MCF 10A (cell line): ENCODE measurements at regions of chr7 and their contacts with region 1.

Region 1: DNA sequence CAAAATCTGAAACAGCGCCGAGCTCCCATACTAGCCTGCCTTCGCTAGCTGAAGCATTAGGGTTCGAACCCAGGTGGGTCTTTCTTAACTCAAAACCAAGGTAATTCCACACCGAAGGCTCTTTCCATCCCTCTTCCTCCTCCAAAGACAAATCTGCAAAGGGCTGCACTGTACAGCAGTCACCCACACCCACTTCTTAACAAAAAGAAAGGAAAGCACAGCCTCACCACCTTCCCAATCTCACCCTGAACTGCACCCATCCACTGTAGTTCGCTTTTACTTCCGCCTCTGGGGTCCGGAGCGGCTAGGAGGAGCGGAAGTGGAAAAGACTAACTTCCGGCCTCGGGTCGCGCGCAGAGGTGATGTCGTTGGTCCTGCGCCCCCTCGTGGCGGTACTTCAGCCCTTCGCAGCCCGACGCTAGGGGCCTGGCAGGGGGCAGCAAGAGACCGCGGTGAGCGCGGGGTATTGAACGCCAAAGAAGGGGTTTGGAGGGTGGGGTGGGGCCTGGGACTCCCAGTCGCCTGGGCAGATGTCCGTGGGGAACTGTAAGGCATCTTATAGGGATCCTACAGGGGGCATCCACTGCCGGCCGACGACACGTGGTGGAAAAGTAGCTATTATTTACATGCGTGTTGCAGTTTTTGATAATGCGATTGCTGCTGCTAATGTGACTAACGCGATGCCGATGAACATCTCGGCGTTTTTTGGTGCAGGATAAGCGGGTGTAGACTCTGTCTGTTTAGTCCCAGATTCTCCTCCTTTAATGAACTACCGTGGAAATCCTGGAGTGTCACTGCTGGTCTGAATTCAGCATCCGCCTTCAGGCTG is at the start of gene MTERF1:
- DNase-seq: peak; percentile 93
- H3K4me3 Mint-ChIP-seq: peak within 1 kb of the TSS; percentile 97
- H3K27ac Mint-ChIP-seq: peak within 1 kb of the TSS; percentile 98
- H3K4me1 Mint-ChIP-seq: peaks cover 33% of the 10 kb centered on the region
- H3K27me3 Mint-ChIP-seq: no peaks in the 10 kb centered on the region
- CTCF ChIP-seq: peak; percentile 94
- total RNA-seq, gene MTERF1: 12.9 and 17.6 TPM in 2 replicates

Region 2: GRCh38 chr7:91596287-91596852 is 284.3 kb before region 1 on chr7:
- CTCF ChIA-PET with region 1: no interaction called
- POLR2A ChIA-PET with region 1: no interaction called
- intact Hi-C with region 1: no loop called
- DNase-seq: no peak
- H3K4me3 Mint-ChIP-seq: no peak overlapping the region
- H3K27ac Mint-ChIP-seq: no peak overlapping the region
- H3K4me1 Mint-ChIP-seq: no peaks in the 10 kb centered on the region
- H3K27me3 Mint-ChIP-seq: no peaks in the 10 kb centered on the region
- CTCF ChIP-seq: no peak

Region 3: GRCh38 chr7:91826377-91826776 is 54.2 kb before region 1 on chr7:
- CTCF ChIA-PET with region 1: interaction called, 276 read pairs
- POLR2A ChIA-PET with region 1: interaction called, 10 read pairs
- intact Hi-C with region 1: loop called (anchors 1 kb)
- DNase-seq: peak; percentile 6
- H3K4me3 Mint-ChIP-seq: no peak overlapping the region
- H3K27ac Mint-ChIP-seq: no peak overlapping the region
- H3K4me1 Mint-ChIP-seq: peaks cover 7% of the 10 kb centered on the region
- H3K27me3 Mint-ChIP-seq: no peaks in the 10 kb centered on the region
- CTCF ChIP-seq: no peak

Region 4: DNA sequence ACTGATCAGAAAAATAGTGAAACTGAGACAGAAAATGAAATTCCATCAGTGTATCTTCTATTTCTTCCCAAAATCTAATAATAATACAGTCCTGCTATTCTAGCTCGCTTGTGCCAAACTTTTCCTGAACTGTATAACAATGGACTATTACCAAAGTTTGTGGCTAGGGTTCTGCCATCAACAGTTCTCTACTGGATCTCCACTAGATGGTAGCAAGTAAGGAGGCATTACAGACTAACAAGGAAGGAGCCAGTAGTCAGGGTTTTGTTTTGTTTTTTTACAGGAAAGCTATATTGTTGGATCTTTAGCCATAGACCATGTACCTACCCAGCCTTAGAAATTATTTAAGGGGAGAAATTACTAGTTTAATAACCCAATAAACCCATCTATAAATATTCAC is 11.0 kb before region 1 on chr7:
- CTCF ChIA-PET with region 1: interaction called, 34 read pairs
- POLR2A ChIA-PET with region 1: interaction called, 4 read pairs
- intact Hi-C with region 1: no loop called
- DNase-seq: no peak
- H3K4me3 Mint-ChIP-seq: no peak overlapping the region
- H3K27ac Mint-ChIP-seq: no peak overlapping the region
- H3K4me1 Mint-ChIP-seq: peaks cover 5% of the 10 kb centered on the region
- H3K27me3 Mint-ChIP-seq: no peaks in the 10 kb centered on the region
- CTCF ChIP-seq: no peak

Region 5: DNA sequence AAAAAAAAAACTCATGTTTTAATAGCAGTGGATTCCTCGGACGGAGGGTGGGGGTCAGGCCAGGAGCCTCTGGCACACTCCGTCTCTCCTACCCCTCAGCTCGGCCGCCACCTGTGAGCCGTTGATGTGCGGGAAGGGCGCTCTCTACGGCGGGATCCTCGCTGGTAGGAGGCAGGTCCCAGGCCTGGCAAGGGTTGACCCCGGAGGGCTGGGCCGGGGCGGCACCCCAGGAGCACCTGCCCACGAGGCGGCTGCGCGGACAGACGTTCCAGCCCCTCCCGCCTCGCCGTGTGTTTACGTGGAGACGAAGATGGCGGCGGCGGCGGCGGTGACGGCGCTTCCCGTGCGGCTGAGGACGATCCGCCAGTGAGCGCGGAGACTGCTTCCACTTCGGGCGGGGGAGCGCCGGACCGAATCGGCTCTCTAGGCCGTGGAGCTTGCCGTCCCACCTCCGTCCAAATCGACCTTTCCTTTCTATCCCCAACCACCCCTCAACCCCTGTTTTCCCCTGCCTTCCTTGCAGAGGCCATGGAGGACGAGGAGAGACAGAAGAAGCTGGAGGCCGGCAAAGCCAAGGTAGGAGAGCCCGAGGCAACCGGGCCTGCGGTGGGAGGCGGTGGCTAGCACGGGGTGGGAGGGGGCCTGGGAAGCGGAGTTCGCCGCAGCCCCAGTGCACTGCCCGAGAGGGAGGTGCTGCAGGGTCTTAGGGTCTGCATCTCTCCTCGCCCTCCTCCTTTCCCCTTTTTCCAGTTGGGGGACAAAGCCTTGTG is 60.1 kb after region 1 on chr7 and contains the start of gene AKAP9:
- CTCF ChIA-PET with region 1: interaction called, 41 read pairs
- POLR2A ChIA-PET with region 1: interaction called, 46 read pairs
- intact Hi-C with region 1: loop called (anchors 2 kb)
- DNase-seq: peak; percentile 88
- H3K4me3 Mint-ChIP-seq: peak within 1 kb of the TSS; percentile 86
- H3K27ac Mint-ChIP-seq: peak within 1 kb of the TSS; percentile 93
- H3K4me1 Mint-ChIP-seq: peaks cover 11% of the 10 kb centered on the region
- H3K27me3 Mint-ChIP-seq: no peaks in the 10 kb centered on the region
- CTCF ChIP-seq: no peak
- total RNA-seq, gene AKAP9: 36.8 and 39.2 TPM in 2 replicates

Region 6: GRCh38 chr7:92043637-92044036 is 163.0 kb after region 1 on chr7:
- CTCF ChIA-PET with region 1: interaction called, 3 read pairs
- POLR2A ChIA-PET with region 1: no interaction called
- intact Hi-C with region 1: loop called (anchors 1 kb)
- DNase-seq: no peak
- H3K4me3 Mint-ChIP-seq: no peak overlapping the region
- H3K27ac Mint-ChIP-seq: no peak overlapping the region
- H3K4me1 Mint-ChIP-seq: no peaks in the 10 kb centered on the region
- H3K27me3 Mint-ChIP-seq: no peaks in the 10 kb centered on the region
- CTCF ChIP-seq: no peak

Region 7: DNA sequence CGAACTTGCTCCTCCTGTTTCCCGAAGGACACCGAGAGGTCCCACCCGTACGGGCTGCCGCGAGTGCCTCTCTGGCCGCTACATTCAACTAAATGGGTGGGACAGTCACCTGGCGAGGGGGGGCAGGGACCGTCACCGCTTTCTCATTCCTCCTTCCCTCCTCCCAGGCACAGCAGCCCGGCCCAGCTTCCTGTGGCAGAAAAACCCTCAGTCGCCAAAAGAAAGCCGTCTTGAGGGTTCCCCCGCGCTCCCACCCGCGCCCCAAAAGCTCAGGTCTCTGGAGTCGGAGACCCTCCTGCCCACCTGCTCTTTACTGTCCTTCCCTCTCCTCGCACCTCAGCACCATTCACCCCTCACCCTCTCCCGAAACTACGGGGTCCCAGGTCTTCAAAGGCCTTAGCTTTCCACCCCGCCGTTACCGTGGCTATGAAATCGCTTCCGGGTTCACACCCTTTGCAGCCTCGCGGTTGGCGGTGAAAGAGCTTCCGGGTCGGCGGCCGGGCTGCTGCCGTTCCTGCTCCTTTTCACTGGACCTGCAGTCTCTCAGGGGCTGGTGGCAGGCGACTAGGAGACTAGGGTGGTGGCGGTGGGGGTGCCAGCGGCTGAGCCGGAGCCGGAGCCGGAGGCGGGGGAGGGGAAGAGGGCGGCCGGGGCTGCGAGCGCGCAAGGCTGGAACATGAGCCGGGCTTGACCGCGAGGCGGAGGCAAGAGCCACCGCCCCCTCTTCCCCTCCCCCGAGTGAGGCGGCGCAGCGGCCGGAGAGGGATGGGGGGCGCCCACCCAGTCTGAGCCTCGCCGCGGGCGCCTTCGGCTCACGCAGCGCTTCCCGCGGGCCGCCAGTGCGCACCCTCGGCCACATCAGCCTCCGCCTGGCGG is 365.1 kb after region 1 on chr7 and contains the starts of genes ANKIB1 and KRIT1:
- CTCF ChIA-PET with region 1: no interaction called
- POLR2A ChIA-PET with region 1: no interaction called
- intact Hi-C with region 1: loop called (anchors 10 kb)
- DNase-seq: peak; percentile 83
- H3K4me3 Mint-ChIP-seq: peak within 1 kb of the TSS; percentile 89
- H3K27ac Mint-ChIP-seq: peak within 1 kb of the TSS; percentile 98
- H3K4me1 Mint-ChIP-seq: peaks cover 29% of the 10 kb centered on the region
- H3K27me3 Mint-ChIP-seq: no peaks in the 10 kb centered on the region
- CTCF ChIP-seq: no peak
- total RNA-seq, gene ANKIB1: 33.0 and 40.1 TPM in 2 replicates
- total RNA-seq, gene KRIT1: 38.9 and 41.3 TPM in 2 replicates

Region 8: DNA sequence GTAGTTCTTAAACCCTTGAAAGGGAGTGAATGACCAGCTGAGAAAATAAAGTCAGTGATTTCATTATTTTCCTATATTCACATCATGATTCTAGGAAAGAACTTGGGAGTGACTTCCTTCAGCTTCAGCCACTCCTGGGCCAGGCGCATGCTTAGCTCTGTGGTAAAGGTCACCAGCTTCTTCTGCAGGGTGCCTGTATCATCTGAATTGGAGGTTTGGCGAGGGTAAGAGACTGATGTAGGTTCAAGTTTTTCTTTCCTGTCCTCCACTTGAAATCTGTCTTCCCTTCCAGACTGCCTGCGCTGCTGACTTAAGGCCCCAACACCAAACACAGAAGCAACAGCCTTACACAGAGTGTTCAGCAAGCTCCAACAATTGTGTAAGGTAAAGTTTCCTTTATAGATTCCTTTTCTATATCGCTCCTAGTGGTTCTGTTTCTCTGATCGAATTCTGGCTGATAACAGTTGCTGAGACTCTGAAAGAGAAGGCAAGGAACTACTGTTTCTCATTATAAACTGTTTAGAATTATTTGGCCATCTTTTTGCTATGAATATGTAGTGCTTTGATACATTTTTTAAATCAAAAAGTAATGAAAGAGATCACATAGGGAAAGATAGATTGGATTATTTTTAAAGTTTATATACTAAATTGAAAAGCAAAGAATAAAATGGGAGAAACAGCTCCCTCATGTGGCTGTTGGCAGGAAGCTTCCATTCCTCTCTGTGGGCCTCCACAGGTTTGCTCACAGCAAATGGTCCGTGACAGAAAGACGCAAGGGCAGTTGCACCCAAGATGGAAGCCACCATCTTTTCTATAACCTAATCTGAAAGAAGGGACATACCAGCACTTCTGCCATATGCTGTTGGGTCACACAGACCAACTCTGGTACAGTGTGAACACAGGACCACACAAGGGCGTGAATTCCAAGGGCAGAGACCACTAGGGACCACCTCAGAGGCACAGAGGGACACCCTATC is 580.7 kb after region 1 on chr7:
- CTCF ChIA-PET with region 1: interaction called, 3 read pairs
- POLR2A ChIA-PET with region 1: no interaction called
- intact Hi-C with region 1: loop called (anchors 5 kb)
- DNase-seq: peak; percentile 49
- H3K4me3 Mint-ChIP-seq: no peak overlapping the region
- H3K27ac Mint-ChIP-seq: no peak overlapping the region
- H3K4me1 Mint-ChIP-seq: peaks cover 11% of the 10 kb centered on the region
- H3K27me3 Mint-ChIP-seq: no peaks in the 10 kb centered on the region
- CTCF ChIP-seq: peak; percentile 62